Heart right ventricle (tissue), 16 donors: ENCODE measurements at regions of chr19 and their contacts with region 1.

Region 1: DNA sequence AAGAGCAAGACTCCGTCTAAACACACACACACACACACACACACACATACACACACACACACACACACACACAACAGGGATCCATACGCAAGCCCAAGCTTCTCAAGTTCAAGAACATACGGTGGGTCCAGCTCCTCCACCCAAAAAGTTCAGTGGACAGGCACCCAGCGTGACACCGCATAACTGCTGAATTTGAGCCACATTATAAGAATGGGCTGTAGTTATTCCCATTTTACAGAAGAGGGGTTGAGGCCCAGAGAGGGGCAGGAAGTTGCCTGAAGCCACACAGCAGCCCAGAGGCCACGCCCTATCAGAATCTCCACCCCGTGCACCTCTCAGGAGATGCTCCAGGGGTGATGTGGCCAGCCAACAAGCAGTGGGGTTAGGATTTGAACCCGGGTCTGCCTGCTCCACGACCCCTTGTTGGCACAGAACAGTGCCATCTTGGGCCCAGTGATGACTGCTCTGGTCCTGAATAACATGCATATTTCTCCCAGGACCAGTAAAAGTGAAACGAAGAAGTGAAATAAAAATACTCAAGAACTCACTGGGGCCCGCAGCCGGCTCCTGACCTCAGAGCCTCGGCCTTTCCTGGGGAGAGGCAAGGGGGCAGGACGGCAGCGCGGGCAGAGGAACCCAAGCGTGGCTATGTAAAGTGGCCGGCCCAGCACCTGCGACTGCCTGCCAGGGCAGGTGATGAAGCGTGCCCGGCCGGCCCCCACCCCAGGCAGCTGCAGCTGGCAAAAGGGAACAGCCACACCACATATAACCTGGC is 61.9 kb downstream of the AP1M1 start:
- DNase-seq: no peak
- ATAC-seq: peak in 1 of 8 donors; percentile 12
- H3K4me3 ChIP-seq: no peak overlapping the region
- H3K27ac ChIP-seq: peak overlapping the region; percentile 61 to 96 (median 90)
- H3K4me1 ChIP-seq: peaks cover 8 to 60% (median 38%) of the 10 kb centered on the region in 9 donors
- H3K27me3 ChIP-seq: no peaks in the 10 kb centered on the region
- CTCF ChIP-seq: no peak

Region 2: DNA sequence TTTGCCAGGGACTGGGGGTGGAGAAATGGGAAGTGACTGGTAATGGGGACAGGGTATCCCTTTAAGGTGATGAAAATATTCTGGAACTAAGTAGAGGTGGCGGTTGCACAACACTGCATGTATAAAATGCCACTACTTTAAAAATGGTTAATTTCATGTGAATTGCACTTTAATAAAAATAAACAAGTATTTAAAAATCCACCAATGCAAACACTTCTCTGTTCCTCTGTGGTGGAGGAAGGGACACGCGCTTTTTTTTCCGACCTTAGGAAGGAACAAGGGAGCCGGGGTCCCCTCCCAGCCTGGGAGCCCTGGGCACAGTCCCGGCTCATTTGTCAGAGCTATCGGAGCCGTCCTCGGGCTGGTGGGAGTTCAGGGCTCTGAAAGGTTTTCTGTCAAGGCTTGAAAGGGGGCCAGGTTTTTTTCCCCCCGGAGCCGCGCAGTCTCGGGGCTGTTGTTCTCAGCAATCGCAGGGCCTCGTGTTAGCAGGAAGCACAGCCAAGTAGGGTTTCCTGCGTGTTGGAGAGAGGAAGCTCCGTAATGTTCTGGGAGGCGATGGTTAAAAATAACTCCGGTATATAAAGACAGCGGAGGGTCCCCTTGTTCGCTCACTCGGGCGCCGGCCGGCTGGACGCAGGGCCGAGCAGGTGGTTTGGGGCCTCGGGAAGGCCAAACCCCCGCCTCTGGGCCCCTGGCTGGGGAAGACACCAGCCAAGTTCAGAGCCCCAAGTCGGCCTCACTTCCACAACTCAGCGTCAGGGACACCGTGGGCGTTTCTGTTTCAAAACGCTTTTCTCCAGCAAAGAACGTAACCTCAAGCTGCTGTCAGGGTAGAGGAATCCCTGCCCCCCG is 23.9 kb after region 1 on chr19:
- intact Hi-C with region 1: loop called in 2 of 10 experiments (anchors 1 to 2 kb)
- DNase-seq: peak; percentile 81 to 94
- ATAC-seq: peak; percentile 88 to 94 (median 92)
- H3K4me3 ChIP-seq: peak overlapping the region in 8 of 10 donors; percentile 19 to 49 (median 38)
- H3K27ac ChIP-seq: peak overlapping the region; percentile 91 to 99 (median 98)
- H3K4me1 ChIP-seq: peaks cover 13 to 89% (median 57%) of the 10 kb centered on the region in 9 donors
- H3K27me3 ChIP-seq: no peaks in the 10 kb centered on the region
- CTCF ChIP-seq: no peak

Region 3: GRCh38 chr19:16293118-16294091 is 33.8 kb after region 1 on chr19:
- intact Hi-C with region 1: loop called in 1 of 10 experiments (anchors 5 kb)
- DNase-seq: peak; percentile 62 to 88
- ATAC-seq: peak; percentile 82 to 91 (median 88)
- H3K4me3 ChIP-seq: peak overlapping the region in 8 of 10 donors; percentile 2 to 41 (median 25)
- H3K27ac ChIP-seq: peak overlapping the region; percentile 73 to 99 (median 90)
- H3K4me1 ChIP-seq: peaks cover 6 to 57% (median 36%) of the 10 kb centered on the region in 9 donors
- H3K27me3 ChIP-seq: no peaks in the 10 kb centered on the region
- CTCF ChIP-seq: no peak

Region 4: GRCh38 chr19:16315825-16316505 is 56.4 kb after region 1 on chr19:
- intact Hi-C with region 1: loop called in 5 of 10 experiments (anchors 2 to 10 kb)
- DNase-seq: peak; percentile 30 to 77
- ATAC-seq: peak; percentile 64 to 85 (median 76)
- H3K4me3 ChIP-seq: no peak overlapping the region
- H3K27ac ChIP-seq: peak overlapping the region; percentile 14 to 90 (median 84)
- H3K4me1 ChIP-seq: peaks cover 7 to 61% (median 49%) of the 10 kb centered on the region in 9 donors
- H3K27me3 ChIP-seq: no peaks in the 10 kb centered on the region
- CTCF ChIP-seq: no peak

Region 5: DNA sequence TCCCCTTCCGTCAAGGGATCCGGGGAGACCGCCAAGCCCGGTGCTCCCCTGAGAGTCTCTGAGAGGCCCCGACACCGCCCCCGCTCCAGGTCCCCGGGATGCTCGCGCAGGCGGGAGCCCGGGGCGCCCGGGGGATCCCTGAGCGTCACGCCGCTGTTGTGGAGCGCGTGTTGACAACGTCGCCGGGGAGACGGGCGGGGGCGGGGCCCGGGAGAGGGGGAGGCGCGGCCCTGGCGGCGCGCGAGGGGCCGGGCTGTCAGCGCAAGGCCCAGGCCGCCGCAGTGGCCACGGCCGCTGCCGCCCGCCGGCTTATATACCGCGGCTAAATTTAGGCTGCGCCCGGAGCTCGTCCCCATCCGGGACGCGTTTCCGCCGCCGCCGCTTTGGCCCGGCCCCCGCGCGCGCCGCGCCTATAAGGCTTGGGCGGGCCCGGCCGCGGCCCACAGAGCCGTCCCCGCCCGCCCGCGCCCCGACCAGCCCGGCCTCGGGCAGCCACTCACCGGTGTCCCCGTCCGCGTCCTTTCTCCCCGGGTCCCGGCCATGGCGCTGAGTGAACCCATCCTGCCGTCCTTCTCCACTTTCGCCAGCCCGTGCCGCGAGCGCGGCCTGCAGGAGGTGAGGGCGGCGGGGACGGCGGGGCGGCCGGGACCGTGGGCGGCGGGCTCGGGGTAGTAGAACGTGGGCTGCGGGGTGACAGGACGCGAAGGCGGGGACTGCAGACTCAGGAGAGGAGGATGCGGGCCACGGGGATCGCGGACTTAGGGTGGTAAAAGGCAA is 65.0 kb after region 1 on chr19 and contains the start of gene KLF2:
- intact Hi-C with region 1: loop called in 6 of 10 experiments (anchors 2 to 10 kb)
- DNase-seq: peak; percentile 95 to 97
- ATAC-seq: peak; percentile 69 to 92 (median 84)
- H3K4me3 ChIP-seq: peak within 1 kb of the TSS; percentile 61 to 96 (median 87)
- H3K27ac ChIP-seq: peak within 1 kb of the TSS; percentile 93 to 99 (median 98)
- H3K4me1 ChIP-seq: peaks cover 0 to 50% (median 35%) of the 10 kb centered on the region in 9 donors
- H3K27me3 ChIP-seq: no peaks in the 10 kb centered on the region
- CTCF ChIP-seq: no peak
- total RNA-seq, gene KLF2: 25.5 to 76.2 (median 50.4) TPM

Region 6: GRCh38 chr19:16330368-16330801 is 70.8 kb after region 1 on chr19:
- intact Hi-C with region 1: loop called in 3 of 10 experiments (anchors 2 to 10 kb)
- DNase-seq: peak; percentile 66 to 73
- ATAC-seq: peak; percentile 18 to 61 (median 42)
- H3K4me3 ChIP-seq: no peak overlapping the region
- H3K27ac ChIP-seq: peak overlapping the region; percentile 5 to 99 (median 90)
- H3K4me1 ChIP-seq: peaks cover 0 to 66% (median 33%) of the 10 kb centered on the region in 9 donors
- H3K27me3 ChIP-seq: no peaks in the 10 kb centered on the region
- CTCF ChIP-seq: no peak